ENCODE measurements at regions of chr10 and their contacts with region 1.

Region 1: DNA sequence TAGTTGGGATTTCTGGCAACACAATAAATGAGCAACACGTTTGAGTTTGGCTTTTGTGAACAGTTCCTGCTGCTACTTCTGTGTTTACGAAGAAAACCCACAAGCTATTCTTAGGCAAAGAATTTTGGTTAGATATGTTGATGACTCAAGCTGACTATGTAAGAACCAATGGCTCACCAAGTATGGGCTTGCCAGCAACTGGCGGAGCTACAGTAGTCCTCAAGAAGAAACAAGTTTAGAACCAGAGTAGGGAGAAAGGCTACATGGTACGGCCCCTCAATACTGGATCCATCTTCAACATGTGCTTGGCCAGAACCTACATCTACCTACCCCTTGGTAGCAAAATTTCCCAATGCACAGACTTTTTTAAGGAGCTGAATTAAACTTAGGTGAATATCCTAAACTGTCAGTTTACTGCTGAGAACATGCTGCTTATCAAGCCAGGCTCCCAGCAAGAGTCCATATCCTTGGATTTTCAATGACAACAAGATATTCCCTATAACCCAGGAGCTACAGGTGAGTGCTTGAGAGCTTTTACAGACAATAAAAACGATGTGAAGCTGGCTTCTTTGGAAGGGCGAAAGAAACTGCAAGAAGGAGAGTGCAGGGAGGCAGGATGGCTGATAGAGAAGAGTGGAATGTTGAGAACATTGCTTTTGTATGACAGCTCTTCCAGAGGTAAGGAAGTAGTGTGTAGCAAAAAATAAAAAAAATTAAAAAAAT is 74.3 kb upstream of the ASAH2 start:
- DNase-seq: peak in 4 of 5 donors; percentile 23 to 79 (median 56)
- ATAC-seq: peak; percentile 66 to 92 (median 88)
- H3K4me3 ChIP-seq: peak overlapping the region in 8 of 12 donors; percentile 10 to 50 (median 34)
- H3K27ac ChIP-seq: peak overlapping the region in 11 of 12 donors; percentile 18 to 84 (median 69)
- H3K4me1 ChIP-seq: peaks cover 0 to 84% (median 41%) of the 10 kb centered on the region in 12 donors
- H3K27me3 ChIP-seq: no peaks in the 10 kb centered on the region
- CTCF ChIP-seq: no peak
- POLR2A ChIP-seq: peak in 1 of 2 donors; percentile 8

Region 2: DNA sequence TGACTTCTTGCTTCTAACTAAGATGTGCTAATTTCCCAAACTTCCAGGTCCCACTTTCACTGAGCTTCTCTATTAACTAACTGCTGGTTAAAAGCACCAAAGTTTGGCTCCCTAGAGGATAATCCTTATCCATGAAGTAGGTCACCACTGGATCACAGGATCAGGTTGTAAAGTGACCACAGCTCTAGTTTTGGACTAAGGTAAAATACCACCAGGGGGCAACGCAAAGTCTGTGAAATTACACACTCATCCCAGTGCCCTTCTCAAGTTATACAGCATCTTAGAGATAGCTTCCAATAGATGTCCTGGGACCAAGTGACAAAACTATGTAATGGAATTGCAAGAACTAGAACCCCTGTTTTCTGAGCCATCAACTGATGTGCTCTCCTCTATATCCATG is 42.1 kb after region 1 on chr10:
- intact Hi-C with region 1: loop called in 2 of 10 experiments (anchors 5 kb)
- DNase-seq: no peak
- ATAC-seq: peak in 1 of 4 donors; percentile 42
- H3K4me3 ChIP-seq: no peak overlapping the region
- H3K27ac ChIP-seq: no peak overlapping the region
- H3K4me1 ChIP-seq: peaks cover 0 to 18% (median 7%) of the 10 kb centered on the region in 12 donors
- H3K27me3 ChIP-seq: no peaks in the 10 kb centered on the region
- CTCF ChIP-seq: peak in 9 of 12 donors; percentile 10 to 43 (median 28)
- POLR2A ChIP-seq: no peak

Region 3: DNA sequence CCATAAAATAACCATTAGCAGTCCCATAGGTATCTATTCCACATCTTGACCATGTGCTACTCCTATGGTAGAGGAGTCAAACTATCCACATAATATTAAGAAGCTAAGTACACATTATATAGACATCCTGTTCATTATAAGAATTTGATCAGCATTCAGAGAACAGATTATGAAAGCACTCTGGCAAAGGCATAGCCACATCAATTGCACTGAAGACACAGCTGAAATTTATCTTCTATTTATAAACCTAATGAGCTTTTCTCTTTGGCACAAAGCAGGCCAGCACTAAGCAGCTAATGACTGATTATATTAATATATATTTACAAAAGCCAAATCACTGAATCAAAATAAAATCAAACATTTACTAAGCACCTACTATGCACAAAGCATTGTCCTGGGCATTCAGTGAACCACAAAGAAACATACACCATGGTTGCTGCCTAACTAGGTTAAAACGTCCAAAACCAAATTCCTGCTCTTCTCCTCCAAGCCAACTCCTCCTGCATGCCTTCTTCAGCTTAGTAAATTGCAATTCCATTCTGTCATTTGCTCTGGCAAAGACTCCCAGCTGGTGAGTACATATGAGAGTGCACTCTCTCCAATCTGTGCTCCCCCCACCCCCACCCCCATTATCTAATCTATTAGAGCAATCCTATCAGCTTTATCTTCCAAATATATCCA is 48.4 kb after region 1 on chr10:
- intact Hi-C with region 1: loop called in 2 of 10 experiments (anchors 5 kb)
- DNase-seq: no peak
- ATAC-seq: peak; percentile 29 to 67 (median 55)
- H3K4me3 ChIP-seq: no peak overlapping the region
- H3K27ac ChIP-seq: peak overlapping the region in 11 of 12 donors; percentile 1 to 75 (median 50)
- H3K4me1 ChIP-seq: peaks cover 0 to 29% (median 22%) of the 10 kb centered on the region in 12 donors
- H3K27me3 ChIP-seq: no peaks in the 10 kb centered on the region
- CTCF ChIP-seq: no peak
- POLR2A ChIP-seq: no peak

Region 4: GRCh38 chr10:50410066-50410811 is 84.6 kb after region 1 on chr10:
- intact Hi-C with region 1: loop called in 2 of 10 experiments (anchors 5 kb)
- DNase-seq: no peak
- ATAC-seq: peak in 1 of 4 donors; percentile 24
- H3K4me3 ChIP-seq: no peak overlapping the region
- H3K27ac ChIP-seq: peak overlapping the region in 1 of 12 donors; percentile 19
- H3K4me1 ChIP-seq: peaks cover 0 to 59% (median 7%) of the 10 kb centered on the region in 12 donors
- H3K27me3 ChIP-seq: no peaks in the 10 kb centered on the region
- CTCF ChIP-seq: no peak
- POLR2A ChIP-seq: no peak

Measured in heart left ventricle (tissue), 16 donors.